ENCODE measurements at regions of chr9 and their contacts with region 1.

Region 1: DNA sequence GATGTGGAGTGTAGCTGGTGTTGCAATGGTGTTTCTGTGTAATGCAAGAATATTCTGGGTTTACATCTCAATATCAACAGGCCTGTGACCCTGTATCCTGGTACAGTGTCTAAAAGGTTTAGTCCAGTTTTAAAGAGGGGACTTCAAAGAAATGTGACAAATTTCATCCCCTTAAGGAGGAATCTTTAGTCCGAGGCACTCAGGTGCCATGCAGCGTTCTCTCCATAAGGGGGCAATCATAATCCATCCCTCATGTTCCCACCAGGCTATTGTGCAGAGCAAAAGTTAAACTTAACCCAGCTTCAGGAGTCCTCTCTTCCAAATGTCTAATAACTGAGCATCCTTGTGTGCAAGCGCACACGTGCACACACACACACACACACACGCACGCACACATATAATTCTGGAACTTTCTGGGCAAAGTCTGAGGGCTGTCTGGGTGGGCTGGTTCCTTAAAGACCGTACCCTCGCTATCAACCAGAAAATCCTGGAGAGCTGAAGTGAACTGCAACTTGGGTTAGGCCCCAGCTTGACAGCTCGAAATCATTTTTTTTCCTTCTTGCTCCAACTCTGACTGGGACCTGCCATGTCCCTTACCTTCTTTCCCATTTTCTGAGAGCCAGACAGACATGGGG is 46.0 kb downstream of the CRB2 start:
- DNase-seq: peak; percentile 57
- ATAC-seq: peak; percentile 96
- H3K4me3 ChIP-seq: no peak overlapping the region
- H3K27ac ChIP-seq: no peak overlapping the region
- H3K4me1 ChIP-seq: no peaks in the 10 kb centered on the region; the same call in 1 of the 2 replicates
- H3K27me3 ChIP-seq: no peaks in the 10 kb centered on the region
- CTCF ChIP-seq: peak; percentile 86
- POLR2A ChIP-seq: no peak
- RAD21 ChIP-seq: peak; percentile 84

Region 2: GRCh38 chr9:122672481-122672880 is 729.5 kb before region 1 on chr9:
- CTCF ChIA-PET with region 1: no interaction called
- POLR2A ChIA-PET with region 1: no interaction called
- dilution Hi-C with region 1: no loop called
- in situ Hi-C with region 1: no loop called
- intact Hi-C with region 1: no loop called
- DNase-seq: no peak
- ATAC-seq: no peak
- H3K4me3 ChIP-seq: no peak overlapping the region
- H3K27ac ChIP-seq: no peak overlapping the region
- H3K4me1 ChIP-seq: no peaks in the 10 kb centered on the region
- H3K27me3 ChIP-seq: peaks cover 3% of the 10 kb centered on the region; the same call in 1 of the 2 replicates
- CTCF ChIP-seq: no peak
- POLR2A ChIP-seq: no peak
- RAD21 ChIP-seq: no peak

Region 3: DNA sequence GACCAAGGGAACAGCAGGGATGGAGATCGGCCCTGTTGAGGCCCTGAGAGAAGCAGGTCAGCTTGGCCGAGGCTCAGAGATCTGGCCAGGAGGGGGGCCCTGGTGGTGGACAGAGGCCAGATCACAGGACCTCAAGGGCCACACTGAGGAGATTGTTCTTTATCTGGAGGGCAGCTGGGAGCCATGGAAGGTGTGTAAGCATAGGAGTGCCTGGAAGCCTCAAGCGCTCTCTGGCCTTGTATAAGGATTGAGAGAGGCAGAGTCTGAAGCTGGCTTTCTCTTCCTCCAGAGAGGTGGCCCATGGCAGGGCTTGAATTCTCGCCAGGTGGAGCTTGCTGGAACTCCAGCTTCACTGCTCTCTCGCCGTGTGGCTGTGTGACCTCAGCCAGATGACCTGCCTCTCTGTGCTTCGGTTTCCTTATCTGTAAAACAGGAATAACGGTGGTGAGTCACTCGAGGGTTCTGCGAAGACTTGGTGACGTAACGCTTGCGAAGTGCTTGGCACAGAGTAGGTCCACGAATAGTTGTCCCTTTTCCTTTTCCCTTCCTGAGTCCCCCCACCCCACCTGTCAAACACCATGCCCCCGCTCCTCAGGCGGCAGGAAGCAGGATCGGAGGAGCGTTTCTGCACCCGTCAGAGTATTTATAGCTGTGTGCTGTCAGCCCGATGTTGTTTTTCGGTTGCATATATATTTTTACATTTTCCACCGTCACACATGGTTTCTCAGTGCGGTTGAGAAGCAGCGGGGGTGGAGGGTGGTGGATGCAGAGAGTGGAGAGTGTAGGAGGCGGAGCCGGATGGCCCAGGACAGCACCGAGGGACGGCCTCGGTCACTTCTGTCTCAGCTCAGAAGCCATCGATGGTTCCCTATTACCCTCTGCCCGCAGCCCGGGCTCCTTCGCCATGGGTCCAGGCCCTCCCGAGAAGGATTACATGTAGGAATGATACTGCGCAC is 63.0 kb before region 1 on chr9:
- CTCF ChIA-PET with region 1: no interaction called
- POLR2A ChIA-PET with region 1: no interaction called
- dilution Hi-C with region 1: no loop called
- in situ Hi-C with region 1: no loop called
- intact Hi-C with region 1: no loop called
- DNase-seq: no peak
- ATAC-seq: no peak
- H3K4me3 ChIP-seq: no peak overlapping the region
- H3K27ac ChIP-seq: no peak overlapping the region
- H3K4me1 ChIP-seq: peaks cover 4% of the 10 kb centered on the region; the same call in 1 of the 2 replicates
- H3K27me3 ChIP-seq: peaks cover 6% of the 10 kb centered on the region
- CTCF ChIP-seq: no peak
- POLR2A ChIP-seq: no peak
- RAD21 ChIP-seq: no peak

Region 4: DNA sequence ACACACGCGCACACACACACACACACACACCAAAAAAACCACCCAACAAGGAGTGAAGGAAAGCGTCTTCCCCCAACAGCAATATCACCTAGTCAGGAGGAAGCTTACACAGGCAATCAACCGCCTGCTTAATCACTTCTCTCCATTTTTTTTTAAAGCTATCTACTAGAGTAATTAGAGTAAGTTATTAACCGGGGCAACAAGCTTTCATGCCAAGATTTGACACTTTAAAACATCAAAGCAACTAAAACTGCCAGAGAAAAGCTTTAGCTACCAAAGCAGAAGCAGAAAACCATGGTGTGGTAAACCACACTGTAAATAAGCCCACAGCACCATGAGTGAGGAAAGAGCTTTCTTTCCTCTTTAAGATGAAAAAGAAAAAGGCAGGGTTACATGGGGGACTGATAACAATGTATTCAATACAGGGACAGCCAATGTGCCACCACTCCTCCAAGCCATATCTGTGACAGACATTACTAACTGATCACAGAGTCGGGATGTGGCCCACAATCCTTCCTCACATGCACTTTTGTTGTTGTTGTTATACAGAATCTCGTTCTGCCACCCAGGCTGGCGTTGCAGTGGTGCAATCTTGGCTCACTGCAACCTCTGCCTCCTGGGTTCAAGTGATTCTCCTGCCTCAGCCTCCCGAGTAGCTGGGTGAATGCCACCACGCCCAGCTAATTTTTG is 236.1 kb after region 1 on chr9:
- CTCF ChIA-PET with region 1: no interaction called
- POLR2A ChIA-PET with region 1: no interaction called
- dilution Hi-C with region 1: no loop called
- in situ Hi-C with region 1: no loop called
- intact Hi-C with region 1: loop called (anchors 10 kb)
- DNase-seq: peak; percentile 3
- ATAC-seq: peak; percentile 37
- H3K4me3 ChIP-seq: peak overlapping the region; percentile 63
- H3K27ac ChIP-seq: no peak overlapping the region
- H3K4me1 ChIP-seq: no peaks in the 10 kb centered on the region; the same call in 1 of the 2 replicates
- H3K27me3 ChIP-seq: no peaks in the 10 kb centered on the region
- CTCF ChIP-seq: no peak
- POLR2A ChIP-seq: no peak
- RAD21 ChIP-seq: no peak

Region 5: GRCh38 chr9:124030969-124031451 is 629.0 kb after region 1 on chr9:
- CTCF ChIA-PET with region 1: no interaction called
- POLR2A ChIA-PET with region 1: no interaction called
- dilution Hi-C with region 1: no loop called
- in situ Hi-C with region 1: loop called (anchors 5 kb)
- intact Hi-C with region 1: no loop called
- DNase-seq: no peak
- ATAC-seq: no peak
- H3K4me3 ChIP-seq: no peak overlapping the region
- H3K27ac ChIP-seq: no peak overlapping the region
- H3K4me1 ChIP-seq: no peaks in the 10 kb centered on the region
- H3K27me3 ChIP-seq: peaks cover 77% of the 10 kb centered on the region
- CTCF ChIP-seq: no peak
- POLR2A ChIP-seq: no peak
- RAD21 ChIP-seq: no peak

Region 6: DNA sequence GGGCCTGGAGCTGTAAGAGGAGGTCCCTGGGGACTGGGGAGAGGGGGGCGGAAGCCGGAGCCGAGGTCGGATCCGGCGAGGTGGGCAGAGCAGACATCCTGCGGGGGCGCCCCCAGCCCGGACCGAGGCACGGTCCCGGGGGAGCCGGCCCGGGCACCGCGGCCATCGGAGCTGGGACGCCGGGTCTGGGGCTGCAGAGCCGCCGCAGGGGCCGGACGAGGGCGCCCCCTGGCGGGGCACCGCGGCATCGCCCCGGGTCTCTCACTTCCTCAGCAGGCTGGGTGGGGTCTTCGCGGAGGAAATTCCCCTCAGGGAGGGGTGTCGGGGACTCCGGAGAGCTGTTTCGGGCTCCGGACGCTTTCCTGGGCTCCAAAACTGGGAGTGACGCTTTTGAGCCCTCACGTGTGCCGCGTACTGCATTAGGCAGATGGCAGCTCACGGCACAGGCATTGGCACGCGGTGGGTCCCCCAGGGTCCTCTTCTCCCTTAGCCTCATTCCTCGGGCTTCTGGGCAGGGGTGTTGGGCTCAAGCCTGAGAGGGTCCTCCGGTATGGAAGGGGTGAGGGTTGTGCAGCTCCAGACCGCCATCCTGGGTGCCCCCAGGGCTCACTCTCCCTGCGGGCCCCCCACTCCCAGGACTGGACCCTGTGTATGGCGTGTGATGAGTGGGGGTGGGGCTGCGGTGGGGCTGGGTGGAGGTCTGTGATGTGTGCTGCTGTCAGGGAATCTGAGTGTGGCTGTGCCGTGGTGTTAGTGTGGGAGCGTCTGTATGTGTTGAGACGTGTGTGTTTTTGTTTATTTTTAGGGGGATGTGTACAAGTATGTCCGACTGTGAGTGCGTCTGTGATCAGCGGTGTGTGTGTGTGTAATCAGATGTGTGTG is 639.2 kb after region 1 on chr9:
- CTCF ChIA-PET with region 1: no interaction called
- POLR2A ChIA-PET with region 1: no interaction called
- dilution Hi-C with region 1: no loop called
- in situ Hi-C with region 1: no loop called
- intact Hi-C with region 1: loop called (anchors 1 kb)
- DNase-seq: no peak
- ATAC-seq: peak; percentile 60
- H3K4me3 ChIP-seq: peak overlapping the region; percentile 17; the same call in 1 of the 2 replicates
- H3K27ac ChIP-seq: no peak overlapping the region
- H3K4me1 ChIP-seq: no peaks in the 10 kb centered on the region; the same call in 1 of the 2 replicates
- H3K27me3 ChIP-seq: peaks cover 80% of the 10 kb centered on the region
- CTCF ChIP-seq: peak; percentile 78
- POLR2A ChIP-seq: no peak
- RAD21 ChIP-seq: peak; percentile 72

Region 7: GRCh38 chr9:124309665-124310064 is 907.7 kb after region 1 on chr9:
- CTCF ChIA-PET with region 1: no interaction called
- POLR2A ChIA-PET with region 1: no interaction called
- dilution Hi-C with region 1: no loop called
- in situ Hi-C with region 1: loop called (anchors 10 kb)
- intact Hi-C with region 1: no loop called
- DNase-seq: peak; percentile 99
- ATAC-seq: peak; percentile 83
- H3K4me3 ChIP-seq: no peak overlapping the region
- H3K27ac ChIP-seq: peak overlapping the region; percentile 93
- H3K4me1 ChIP-seq: peaks cover 29% of the 10 kb centered on the region
- H3K27me3 ChIP-seq: no peaks in the 10 kb centered on the region
- CTCF ChIP-seq: no peak
- POLR2A ChIP-seq: no peak
- RAD21 ChIP-seq: no peak

Measured in IMR-90 (cell line).